Heart right ventricle (tissue), 16 donors: ENCODE measurements at regions of chr11 and their contacts with region 1.

Region 1: DNA sequence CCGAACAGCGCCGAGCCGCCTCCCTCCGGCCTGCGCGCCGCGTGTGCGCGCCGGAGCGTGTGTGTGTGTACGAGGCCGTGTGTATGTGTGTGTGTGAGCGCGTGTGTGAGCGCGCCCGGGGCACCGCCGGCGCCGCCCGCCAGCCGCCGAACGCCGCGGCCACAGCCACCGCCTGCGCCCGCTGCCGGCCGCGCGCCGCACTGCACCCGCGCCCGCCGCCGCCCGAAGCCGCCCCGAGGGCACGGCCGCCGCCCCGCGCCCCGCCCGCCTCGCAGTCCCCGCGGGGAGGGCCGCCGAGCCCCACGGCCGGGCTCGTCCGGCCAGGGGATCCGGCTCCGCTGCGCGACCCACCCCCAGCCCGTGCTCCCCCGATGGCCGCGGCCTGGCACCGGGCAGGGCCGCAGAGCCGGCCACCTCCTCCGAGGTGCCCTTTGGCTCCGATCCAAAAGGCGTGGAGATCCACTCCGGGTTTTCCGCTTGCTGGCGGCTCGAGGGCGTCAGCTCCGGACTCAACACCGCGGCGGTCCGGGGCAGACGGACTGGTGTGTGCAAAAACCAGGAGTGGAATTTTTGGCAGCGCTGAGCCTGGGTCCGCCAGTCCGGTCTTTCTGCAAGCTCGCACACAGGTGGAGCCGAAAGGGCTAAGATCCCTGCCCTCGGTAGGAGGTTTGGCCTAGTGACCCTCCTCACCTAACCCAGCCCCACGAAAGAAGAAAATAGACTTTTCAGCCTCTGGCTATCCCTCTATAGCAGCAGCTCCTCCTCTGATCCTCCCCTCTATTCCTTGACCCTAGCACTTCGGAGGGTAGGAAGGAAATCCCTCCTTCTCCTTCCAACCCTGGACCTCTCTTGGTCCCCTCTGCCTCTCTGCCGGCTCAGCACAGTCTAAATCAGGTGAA is at the start of gene SYT7:
- DNase-seq: peak; percentile 96 to 97
- ATAC-seq: peak; percentile 82 to 93 (median 88)
- H3K4me3 ChIP-seq: peak within 1 kb of the TSS; percentile 43 to 70 (median 61)
- H3K27ac ChIP-seq: peak within 1 kb of the TSS; percentile 54 to 93 (median 82)
- H3K4me1 ChIP-seq: peaks cover 6 to 42% (median 16%) of the 10 kb centered on the region in 9 donors
- H3K27me3 ChIP-seq: peaks cover 0 to 41% (median 0%) of the 10 kb centered on the region in 7 donors
- CTCF ChIP-seq: peak in 4 of 9 donors; percentile 8 to 32 (median 16)
- total RNA-seq, gene SYT7: 11.5 to 26.1 (median 18.7) TPM

Region 2: DNA sequence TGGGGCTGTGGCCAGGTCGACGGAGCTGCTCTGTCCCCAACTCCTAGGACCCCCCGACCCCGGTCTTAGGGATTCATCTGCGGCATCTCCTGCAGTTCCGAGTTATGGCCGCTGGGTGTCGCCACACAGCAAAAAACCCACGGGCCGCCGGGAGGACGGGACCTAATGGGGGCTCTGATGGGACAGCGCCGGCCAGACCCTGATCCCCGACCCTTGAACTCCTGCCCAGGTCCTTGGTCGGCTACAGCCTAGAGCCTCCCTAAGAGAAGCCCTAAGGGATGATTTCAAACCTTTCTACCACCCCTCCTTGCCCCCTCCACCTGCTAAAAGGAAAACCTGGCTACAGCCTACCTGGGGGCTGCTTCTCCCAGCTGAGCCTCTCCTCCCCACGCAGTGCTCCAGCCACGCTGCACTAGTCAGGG is 103.5 kb before region 1 on chr11:
- intact Hi-C with region 1: loop called in 5 of 10 experiments (anchors 2 to 10 kb)
- DNase-seq: peak; percentile 47 to 59
- ATAC-seq: peak; percentile 5 to 54 (median 42)
- H3K4me3 ChIP-seq: no peak overlapping the region
- H3K27ac ChIP-seq: peak overlapping the region in 5 of 10 donors; percentile 19 to 61 (median 44)
- H3K4me1 ChIP-seq: peaks cover 3 to 41% (median 17%) of the 10 kb centered on the region in 9 donors
- H3K27me3 ChIP-seq: no peaks in the 10 kb centered on the region
- CTCF ChIP-seq: peak; percentile 91 to 97 (median 94)

Region 3: GRCh38 chr11:61539006-61539405 is 42.3 kb before region 1 on chr11:
- intact Hi-C with region 1: loop called in 3 of 10 experiments (anchors 5 kb)
- DNase-seq: peak in 1 of 2 donors; percentile 29
- ATAC-seq: peak in 4 of 8 donors; percentile 16 to 51 (median 24)
- H3K4me3 ChIP-seq: no peak overlapping the region
- H3K27ac ChIP-seq: no peak overlapping the region
- H3K4me1 ChIP-seq: peaks cover 0 to 53% (median 25%) of the 10 kb centered on the region in 9 donors
- H3K27me3 ChIP-seq: no peaks in the 10 kb centered on the region
- CTCF ChIP-seq: no peak

Region 4: DNA sequence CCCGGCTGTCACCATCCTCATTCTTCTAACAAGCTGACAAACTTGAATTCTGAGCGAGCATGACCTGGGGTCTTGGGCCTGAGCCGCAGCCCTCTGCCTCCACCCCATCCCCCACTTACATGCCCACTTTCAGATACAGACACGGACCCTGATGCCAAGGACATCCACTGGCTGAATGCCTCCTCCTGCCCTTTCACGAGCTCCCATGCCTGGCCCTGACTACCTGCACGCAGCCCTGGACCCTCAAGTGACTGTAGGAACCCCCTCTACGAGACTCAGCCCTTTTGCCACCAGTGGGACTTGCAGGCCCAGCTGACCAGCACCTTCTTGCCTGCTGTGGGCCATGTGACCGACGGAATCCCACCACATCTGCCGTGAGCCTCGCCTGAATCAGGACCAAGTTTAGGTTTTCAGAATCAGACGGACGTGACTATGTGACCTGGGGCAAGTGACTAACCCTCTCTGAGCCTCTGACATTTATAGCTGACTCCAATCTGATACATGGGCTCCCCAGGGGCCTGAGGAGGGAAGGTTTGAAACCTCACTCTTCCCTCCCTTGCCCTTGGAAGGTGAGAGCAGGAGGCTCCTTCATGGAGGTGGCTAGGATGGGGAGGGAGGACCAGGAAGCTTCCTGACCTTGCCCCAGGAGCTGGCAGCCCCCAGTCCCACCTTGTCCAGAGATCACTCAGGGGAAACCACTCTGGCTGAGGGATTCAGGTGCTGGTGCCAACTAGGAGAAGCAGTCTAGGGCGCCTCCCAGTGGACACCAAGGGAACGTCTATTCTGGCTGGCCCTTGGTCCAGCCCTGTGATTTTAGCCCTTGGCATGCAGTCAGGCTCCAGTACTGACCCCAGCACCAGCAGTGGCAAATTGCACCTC is 46.5 kb after region 1 on chr11:
- intact Hi-C with region 1: loop called in 9 of 10 experiments (anchors 1 to 10 kb)
- DNase-seq: peak; percentile 74 to 77
- ATAC-seq: peak; percentile 71 to 93 (median 83)
- H3K4me3 ChIP-seq: no peak overlapping the region
- H3K27ac ChIP-seq: peak overlapping the region in 5 of 10 donors; percentile 7 to 90 (median 88)
- H3K4me1 ChIP-seq: peaks cover 0 to 27% (median 16%) of the 10 kb centered on the region in 9 donors
- H3K27me3 ChIP-seq: no peaks in the 10 kb centered on the region
- CTCF ChIP-seq: peak; percentile 61 to 93 (median 86)

Region 5: GRCh38 chr11:62889484-62890437 is 1308.5 kb after region 1 on chr11:
- intact Hi-C with region 1: no loop called
- DNase-seq: no peak
- ATAC-seq: peak in 2 of 8 donors; percentile 11 to 20
- H3K4me3 ChIP-seq: no peak overlapping the region
- H3K27ac ChIP-seq: peak overlapping the region in 5 of 10 donors; percentile 35 to 76 (median 56)
- H3K4me1 ChIP-seq: peaks cover 0 to 39% (median 14%) of the 10 kb centered on the region in 9 donors
- H3K27me3 ChIP-seq: no peaks in the 10 kb centered on the region
- CTCF ChIP-seq: no peak